WTC11 (cell line): ENCODE measurements at regions of chr1 and their contacts with region 1.

Region 1: GRCh38 chr1:66343569-66344325 is 190.2 kb upstream of the SGIP1 start:
- DNase-seq: no peak
- ATAC-seq: no peak
- H3K4me3 Mint-ChIP-seq: no peak overlapping the region
- H3K27ac Mint-ChIP-seq: 0 out of 2 replicates have a peak overlapping the region, but pooled peaks have one; percentile 10
- H3K4me1 Mint-ChIP-seq: peaks cover 59% of the 10 kb centered on the region
- H3K27me3 Mint-ChIP-seq: no peaks in the 10 kb centered on the region
- CTCF ChIP-seq: no peak

Region 2: DNA sequence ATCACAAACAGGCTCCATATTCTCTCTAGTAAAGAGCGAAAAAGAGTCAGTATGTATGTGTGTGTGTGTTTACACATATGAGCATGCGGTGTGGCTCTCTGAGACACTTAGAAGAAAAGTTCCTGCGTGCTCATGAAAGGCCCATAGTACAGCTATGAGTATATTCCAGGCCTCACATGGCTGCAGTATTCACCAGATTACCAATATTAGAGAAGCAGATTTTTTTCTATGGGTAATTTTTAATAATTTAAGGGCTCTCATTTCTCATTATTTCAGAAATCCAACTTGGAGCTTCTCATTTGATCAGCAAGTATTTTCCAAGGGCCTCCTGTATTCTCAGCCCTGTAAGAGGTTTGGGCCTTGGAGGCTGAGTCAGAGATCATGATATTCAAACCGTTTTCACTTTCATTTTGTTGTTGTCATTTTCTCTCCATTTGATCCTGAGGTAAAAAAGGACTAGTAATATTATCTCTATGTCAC is 42.7 kb before region 1 on chr1:
- CTCF ChIA-PET with region 1: no interaction called
- POLR2A ChIA-PET with region 1: no interaction called
- DNase-seq: no peak
- ATAC-seq: no peak
- H3K4me3 Mint-ChIP-seq: no peak overlapping the region
- H3K27ac Mint-ChIP-seq: no peak overlapping the region
- H3K4me1 Mint-ChIP-seq: no peaks in the 10 kb centered on the region
- H3K27me3 Mint-ChIP-seq: no peaks in the 10 kb centered on the region
- CTCF ChIP-seq: no peak

Region 3: DNA sequence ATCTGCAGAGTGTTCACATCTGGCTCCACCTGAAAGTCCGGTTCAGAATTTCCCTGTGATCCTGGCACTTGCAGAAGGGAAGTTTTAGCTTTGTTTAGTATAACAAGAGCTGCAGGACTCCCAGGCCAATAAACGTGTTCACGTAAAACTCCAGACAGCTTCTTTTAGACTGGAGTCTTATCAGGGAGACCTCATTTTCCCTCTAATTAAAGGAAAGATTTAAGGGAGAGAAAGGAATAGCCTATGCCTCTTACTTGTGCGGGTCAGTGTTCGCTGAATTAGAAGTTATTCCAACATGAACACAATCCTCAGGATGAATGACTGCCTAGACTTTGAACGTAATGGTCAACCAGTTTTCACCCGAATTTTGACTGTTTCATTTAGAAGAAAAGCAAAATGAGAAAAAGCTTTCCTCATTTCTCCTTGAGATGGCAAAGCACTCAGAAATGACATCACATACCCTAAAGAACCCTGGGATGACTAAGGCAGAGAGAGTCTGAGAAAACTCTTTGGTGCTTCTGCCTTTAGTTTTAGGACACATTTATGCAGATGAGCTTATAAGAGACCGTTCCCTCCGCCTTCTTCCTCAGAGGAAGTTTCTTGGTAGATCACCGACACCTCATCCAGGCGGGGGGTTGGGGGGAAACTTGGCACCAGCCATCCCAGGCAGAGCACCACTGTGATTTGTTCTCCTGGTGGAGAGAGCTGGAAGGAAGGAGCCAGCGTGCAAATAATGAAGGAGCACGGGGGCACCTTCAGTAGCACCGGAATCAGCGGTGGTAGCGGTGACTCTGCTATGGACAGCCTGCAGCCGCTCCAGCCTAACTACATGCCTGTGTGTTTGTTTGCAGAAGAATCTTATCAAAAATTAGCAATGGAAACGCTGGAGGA is 11.8 kb before region 1 on chr1:
- CTCF ChIA-PET with region 1: interaction called, 14 read pairs
- POLR2A ChIA-PET with region 1: interaction called, 3 read pairs
- DNase-seq: peak; percentile 58
- ATAC-seq: peak; percentile 85
- H3K4me3 Mint-ChIP-seq: peak overlapping the region; percentile 74
- H3K27ac Mint-ChIP-seq: peak overlapping the region; percentile 85
- H3K4me1 Mint-ChIP-seq: peaks cover 61% of the 10 kb centered on the region
- H3K27me3 Mint-ChIP-seq: no peaks in the 10 kb centered on the region; the same call in 1 of the 2 replicates
- CTCF ChIP-seq: no peak